ENCODE measurements at regions of chr19 and their contacts with region 1.

Region 1: DNA sequence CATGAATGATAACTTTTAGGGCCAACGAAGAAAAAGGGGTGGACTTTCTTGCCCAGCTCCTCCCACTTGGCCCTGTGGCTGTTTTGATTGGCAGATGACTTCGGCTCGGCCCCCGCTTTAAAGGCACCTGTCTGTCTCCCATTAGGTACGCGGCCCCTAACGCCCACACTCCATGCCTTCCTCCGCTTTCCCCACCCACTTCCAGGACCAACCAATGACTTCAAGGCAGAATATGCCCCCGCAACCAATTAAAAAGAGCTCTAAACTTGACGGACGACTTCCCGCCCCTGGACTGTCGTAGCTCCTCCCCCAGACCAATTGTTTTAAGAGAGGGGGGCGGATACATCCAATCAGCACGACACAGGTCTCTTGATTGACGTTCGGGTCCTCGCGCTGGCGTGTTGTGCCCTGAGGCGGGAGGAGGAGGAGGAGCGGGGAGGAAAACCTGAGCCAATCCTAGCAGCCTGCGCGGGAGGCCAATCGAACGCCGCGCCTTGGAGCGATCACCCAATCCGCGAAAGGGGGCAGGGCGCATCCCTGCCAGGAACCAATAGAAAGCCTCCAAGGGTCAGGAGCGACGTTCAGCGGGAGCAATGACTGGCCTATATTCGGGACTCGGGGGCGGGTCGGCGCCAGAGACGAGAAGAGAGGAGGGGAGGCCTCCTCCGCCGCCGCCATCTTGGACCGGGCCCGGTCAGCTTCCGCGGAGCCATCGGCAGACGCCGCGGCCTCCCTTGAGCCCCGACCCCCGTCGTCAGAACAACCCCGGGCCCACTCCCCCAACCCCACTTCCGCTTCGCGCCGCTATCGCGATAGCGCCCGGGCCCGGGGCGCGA is at the start of gene CNOT3:
- DNase-seq: peak; percentile 95 to 100 (median 99)
- ATAC-seq: peak; percentile 76
- H3K4me3 ChIP-seq: peak within 1 kb of the TSS; percentile 55 to 74
- H3K4me3 Mint-ChIP-seq: peak within 1 kb of the TSS; percentile 88
- H3K27ac ChIP-seq: peak within 1 kb of the TSS; percentile 85 to 97
- H3K27ac Mint-ChIP-seq: peak within 1 kb of the TSS; percentile 95
- H3K4me1 ChIP-seq: peaks cover 33% of the 10 kb centered on the region
- H3K4me1 Mint-ChIP-seq: peaks cover 50% of the 10 kb centered on the region
- H3K27me3 ChIP-seq: peaks cover 0 to 3% of the 10 kb centered on the region in 2 experiments
- H3K27me3 Mint-ChIP-seq: no peaks in the 10 kb centered on the region
- CTCF ChIP-seq: no peak
- total RNA-seq, gene CNOT3: 30.8 to 42.3 TPM

Region 2: GRCh38 chr19:54102421-54103169 is 34.7 kb before region 1 on chr19 and contains the start of gene NDUFA3:
- CTCF ChIA-PET with region 1: no interaction called
- POLR2A ChIA-PET with region 1: no interaction called
- intact Hi-C with region 1: loop called (anchors 1 kb)
- DNase-seq: peak; percentile 94 to 100 (median 98)
- ATAC-seq: peak; percentile 99
- H3K4me3 ChIP-seq: peak within 1 kb of the TSS; percentile 66 to 81
- H3K4me3 Mint-ChIP-seq: peak within 1 kb of the TSS; percentile 99
- H3K27ac ChIP-seq: peak within 1 kb of the TSS; percentile 58 to 84
- H3K27ac Mint-ChIP-seq: peak within 1 kb of the TSS; percentile 96
- H3K4me1 ChIP-seq: peaks cover 10% of the 10 kb centered on the region
- H3K4me1 Mint-ChIP-seq: peaks cover 35% of the 10 kb centered on the region
- H3K27me3 ChIP-seq: no peaks in the 10 kb centered on the region
- H3K27me3 Mint-ChIP-seq: no peaks in the 10 kb centered on the region
- CTCF ChIP-seq: no peak
- total RNA-seq, gene NDUFA3: 51.8 to 66.8 TPM

Region 3: GRCh38 chr19:54115109-54116063 is 21.9 kb before region 1 on chr19 and contains the starts of genes PRPF31 and TFPT:
- CTCF ChIA-PET with region 1: interaction called, 3 read pairs
- POLR2A ChIA-PET with region 1: interaction called, 67 read pairs
- intact Hi-C with region 1: loop called (anchors 1 kb)
- DNase-seq: peak; percentile 90 to 99 (median 97)
- ATAC-seq: peak; percentile 87
- H3K4me3 ChIP-seq: peak within 1 kb of the TSS; percentile 77 to 81
- H3K4me3 Mint-ChIP-seq: peak within 1 kb of the TSS; percentile 91
- H3K27ac ChIP-seq: peak within 1 kb of the TSS; percentile 64 to 89
- H3K27ac Mint-ChIP-seq: peak within 1 kb of the TSS; percentile 90
- H3K4me1 ChIP-seq: peaks cover 22% of the 10 kb centered on the region
- H3K4me1 Mint-ChIP-seq: peaks cover 40% of the 10 kb centered on the region
- H3K27me3 ChIP-seq: no peaks in the 10 kb centered on the region
- H3K27me3 Mint-ChIP-seq: no peaks in the 10 kb centered on the region
- CTCF ChIP-seq: no peak
- total RNA-seq, gene PRPF31: 60.0 to 66.8 TPM
- total RNA-seq, gene TFPT: 7.8 to 8.2 TPM

Region 4: DNA sequence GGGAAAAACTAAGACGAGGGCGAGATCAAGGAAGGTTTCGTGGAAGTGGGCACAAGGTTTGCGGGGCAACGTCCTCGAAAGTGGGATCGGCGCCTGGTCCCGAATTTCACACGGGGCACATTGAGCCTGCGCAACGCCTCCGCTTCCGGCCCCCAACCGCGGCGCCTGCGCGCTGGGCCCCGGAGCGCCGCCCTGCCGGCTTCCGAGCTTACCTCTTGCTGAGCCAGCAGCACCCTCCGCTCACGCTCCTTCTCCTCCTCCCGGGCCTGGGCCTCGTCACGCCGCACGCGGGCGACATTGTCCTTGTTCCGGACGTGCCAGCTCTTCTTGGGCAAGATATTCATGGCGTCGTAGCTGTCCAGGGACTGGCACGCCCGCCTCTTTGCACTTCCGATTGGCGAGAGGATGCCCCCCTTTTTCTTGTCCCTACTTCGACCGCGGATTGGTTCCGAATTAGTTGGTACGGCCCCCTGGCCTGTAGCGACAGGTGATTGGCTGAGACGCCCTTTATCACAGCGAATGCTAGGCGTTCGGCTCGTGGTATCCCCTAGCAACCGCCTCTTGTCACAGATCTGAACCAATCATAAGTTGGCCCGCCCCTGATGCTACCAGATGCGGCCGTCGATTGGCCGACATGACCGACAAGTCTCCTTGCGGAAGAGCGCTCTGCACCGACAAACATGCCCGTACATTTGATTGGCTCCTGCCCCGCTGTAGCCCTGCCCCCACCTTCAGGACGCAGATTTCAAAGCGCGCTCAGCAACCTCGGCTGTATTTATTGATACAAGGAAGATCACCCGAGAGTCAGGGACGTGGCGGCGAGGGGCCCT is 22.3 kb after region 1 on chr19 and contains the start of gene LENG1:
- CTCF ChIA-PET with region 1: interaction called, 6 read pairs
- POLR2A ChIA-PET with region 1: interaction called, 42 read pairs
- intact Hi-C with region 1: loop called (anchors 1 kb)
- DNase-seq: peak; percentile 96 to 100 (median 98)
- ATAC-seq: peak; percentile 84
- H3K4me3 ChIP-seq: peak within 1 kb of the TSS; percentile 71 to 75
- H3K4me3 Mint-ChIP-seq: peak within 1 kb of the TSS; percentile 99
- H3K27ac ChIP-seq: peak within 1 kb of the TSS; percentile 79 to 87
- H3K27ac Mint-ChIP-seq: peak within 1 kb of the TSS; percentile 99
- H3K4me1 ChIP-seq: peaks cover 67% of the 10 kb centered on the region
- H3K4me1 Mint-ChIP-seq: peaks cover 59% of the 10 kb centered on the region
- H3K27me3 ChIP-seq: peaks cover 0 to 2% of the 10 kb centered on the region in 2 experiments
- H3K27me3 Mint-ChIP-seq: peaks cover 2% of the 10 kb centered on the region
- CTCF ChIP-seq: no peak
- total RNA-seq, gene LENG1: 15.5 to 15.8 TPM

Region 5: DNA sequence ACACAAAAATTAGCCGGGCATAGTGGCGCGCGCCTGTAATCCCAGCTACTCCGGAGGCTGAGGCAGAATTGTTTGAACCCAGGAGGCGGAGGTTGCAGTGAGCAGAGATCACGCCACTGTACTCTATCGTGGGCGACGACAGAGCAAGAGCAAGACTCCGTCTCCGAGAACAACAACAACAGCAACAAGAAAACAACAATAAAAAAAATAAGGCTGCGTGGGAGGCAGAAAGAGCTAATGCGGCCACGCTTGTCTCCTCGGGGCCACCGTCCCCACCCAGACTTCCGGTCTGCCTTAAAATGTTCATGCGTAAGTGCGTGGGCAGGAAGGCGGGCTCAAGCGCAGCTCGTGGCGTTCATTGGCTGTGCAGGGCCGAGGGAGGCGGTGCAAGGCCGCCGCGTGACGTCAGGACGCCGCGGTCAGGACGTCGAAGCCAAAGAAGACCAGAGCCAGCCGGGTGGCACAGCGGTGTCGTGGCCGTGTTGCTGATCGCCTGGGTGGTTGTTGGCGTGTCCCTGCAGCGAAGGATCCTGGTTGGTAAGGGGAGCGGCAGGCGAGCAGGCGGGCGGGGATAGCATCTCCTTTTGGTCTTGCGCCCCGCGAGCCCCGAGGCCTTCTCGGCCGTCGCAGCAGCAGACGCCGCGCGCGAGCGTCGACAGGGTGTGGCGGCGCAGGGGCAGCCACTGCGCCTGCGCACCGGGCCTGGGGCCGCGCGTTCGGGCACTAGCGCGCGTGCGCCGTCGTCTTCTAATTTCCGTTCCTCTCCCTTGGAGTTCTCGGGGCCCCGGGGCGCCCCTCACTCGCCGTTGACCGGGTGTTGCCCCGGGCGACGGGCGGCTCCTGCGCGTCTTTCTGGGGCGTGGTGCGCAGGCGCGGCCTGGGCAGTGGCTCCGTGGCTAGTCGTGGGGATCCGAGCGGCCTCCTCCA is 311.7 kb after region 1 on chr19 and contains the start of gene LENG8:
- CTCF ChIA-PET with region 1: no interaction called
- POLR2A ChIA-PET with region 1: interaction called, 3 read pairs
- intact Hi-C with region 1: loop called (anchors 1 kb)
- DNase-seq: peak; percentile 94 to 100 (median 97)
- ATAC-seq: peak; percentile 89
- H3K4me3 ChIP-seq: peak within 1 kb of the TSS; percentile 66 to 67
- H3K4me3 Mint-ChIP-seq: peak within 1 kb of the TSS; percentile 99
- H3K27ac ChIP-seq: peak within 1 kb of the TSS; percentile 97 to 98
- H3K27ac Mint-ChIP-seq: peak within 1 kb of the TSS; percentile 99
- H3K4me1 ChIP-seq: peaks cover 39% of the 10 kb centered on the region
- H3K4me1 Mint-ChIP-seq: peaks cover 52% of the 10 kb centered on the region
- H3K27me3 ChIP-seq: no peaks in the 10 kb centered on the region
- H3K27me3 Mint-ChIP-seq: no peaks in the 10 kb centered on the region
- CTCF ChIP-seq: no peak
- total RNA-seq, gene LENG8: 514 to 558 TPM

Region 6: GRCh38 chr19:54463531-54464043 is 326.3 kb after region 1 on chr19 and contains the start of gene LENG9:
- CTCF ChIA-PET with region 1: no interaction called
- POLR2A ChIA-PET with region 1: interaction called, 3 read pairs
- intact Hi-C with region 1: loop called in 1 of 2 experiments (anchors 5 kb)
- DNase-seq: peak; percentile 81 to 100 (median 91)
- ATAC-seq: peak; percentile 70
- H3K4me3 ChIP-seq: peak within 1 kb of the TSS; percentile 79 to 83
- H3K4me3 Mint-ChIP-seq: peak within 1 kb of the TSS; percentile 86
- H3K27ac ChIP-seq: peak within 1 kb of the TSS; percentile 81 to 84
- H3K27ac Mint-ChIP-seq: peak within 1 kb of the TSS; percentile 93
- H3K4me1 ChIP-seq: peaks cover 20% of the 10 kb centered on the region
- H3K4me1 Mint-ChIP-seq: peaks cover 36% of the 10 kb centered on the region
- H3K27me3 ChIP-seq: no peaks in the 10 kb centered on the region
- H3K27me3 Mint-ChIP-seq: no peaks in the 10 kb centered on the region
- CTCF ChIP-seq: no peak
- total RNA-seq, gene LENG9: 2.3 to 2.7 TPM